MCF 10A (cell line): ENCODE measurements at regions of chr7 and their contacts with region 1.

Region 1: GRCh38 chr7:22402250-22402649 is 45.3 kb upstream of the RAPGEF5 start:
- DNase-seq: no peak
- H3K4me3 Mint-ChIP-seq: no peak overlapping the region
- H3K27ac Mint-ChIP-seq: no peak overlapping the region
- H3K4me1 Mint-ChIP-seq: peaks cover 9% of the 10 kb centered on the region
- H3K27me3 Mint-ChIP-seq: no peaks in the 10 kb centered on the region
- CTCF ChIP-seq: no peak

Region 2: DNA sequence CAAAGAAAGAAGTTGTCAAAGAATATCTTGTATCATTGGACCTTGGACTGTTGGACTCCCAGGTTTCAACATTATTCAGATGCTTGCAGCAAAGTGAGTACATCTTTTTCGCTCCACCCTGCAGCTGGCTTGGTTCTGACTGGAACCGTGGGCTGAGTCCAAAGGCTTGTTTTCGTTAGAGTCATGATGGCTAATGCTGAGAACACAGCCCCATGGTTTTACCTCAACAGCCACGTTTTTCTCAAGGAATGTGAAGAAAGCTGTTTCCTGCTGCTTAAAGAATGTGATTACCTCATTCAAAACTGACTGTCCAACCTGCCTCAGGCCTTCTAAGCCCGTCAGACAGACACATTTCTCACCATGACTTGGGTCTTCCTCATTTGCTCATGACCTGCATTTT is 28.2 kb after region 1 on chr7:
- CTCF ChIA-PET with region 1: no interaction called
- POLR2A ChIA-PET with region 1: no interaction called
- intact Hi-C with region 1: loop called (anchors 2 kb)
- DNase-seq: peak; percentile 58
- H3K4me3 Mint-ChIP-seq: no peak overlapping the region
- H3K27ac Mint-ChIP-seq: peak overlapping the region; percentile 49
- H3K4me1 Mint-ChIP-seq: peaks cover 24% of the 10 kb centered on the region
- H3K27me3 Mint-ChIP-seq: no peaks in the 10 kb centered on the region
- CTCF ChIP-seq: no peak